ENCODE measurements at regions of chr21 and their contacts with region 1.

Region 1: DNA sequence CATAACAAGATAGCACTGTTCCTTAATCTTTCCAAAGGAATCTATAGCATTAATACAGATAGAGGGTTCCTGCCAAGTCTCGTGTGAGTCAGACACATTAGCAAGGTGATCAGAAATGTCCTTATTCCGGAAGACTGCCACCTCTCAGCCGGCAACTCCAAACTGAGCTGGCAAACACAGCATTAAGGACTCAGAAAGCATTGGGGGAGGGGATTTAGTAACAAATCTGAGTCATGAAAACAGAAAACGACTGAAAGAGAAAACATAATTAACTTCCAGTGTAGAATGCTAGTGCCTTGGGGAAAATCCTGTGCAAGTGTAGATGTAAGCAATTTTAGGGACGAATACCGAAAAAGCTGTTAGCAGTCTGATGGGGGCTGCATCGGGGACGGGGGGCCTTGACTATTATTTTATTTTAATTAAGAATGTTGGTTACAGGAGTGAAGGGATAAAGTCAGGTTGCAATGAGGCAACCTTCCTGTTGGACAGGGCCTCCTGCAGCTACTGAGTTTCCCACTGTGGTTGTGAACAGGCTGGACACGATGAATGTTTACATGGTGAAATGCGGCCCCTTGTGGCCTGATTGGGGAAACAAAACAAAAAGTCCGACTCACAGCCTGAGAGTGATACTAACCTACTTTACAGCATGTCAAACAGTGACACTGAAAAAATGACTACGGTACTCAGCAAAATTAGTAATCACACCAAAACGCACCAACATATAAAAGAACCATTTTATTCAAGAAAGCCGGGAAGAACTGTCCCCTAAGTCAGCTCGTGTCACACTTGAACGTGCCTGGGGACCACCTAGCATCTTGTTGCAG is 20.7 kb downstream of the MIS18A start:
- DNase-seq: peak in 1 of 2 donors; percentile 45
- ATAC-seq: peak; percentile 73 to 82
- H3K4me3 ChIP-seq: no peak overlapping the region
- H3K27ac ChIP-seq: no peak overlapping the region
- H3K4me1 ChIP-seq: peaks cover 0 to 4% of the 10 kb centered on the region in 2 donors
- H3K27me3 ChIP-seq: peaks cover 0 to 3% (median 3%) of the 10 kb centered on the region in 3 donors
- CTCF ChIP-seq: peak; percentile 44 to 65 (median 59)
- POLR2A ChIP-seq: no peak

Region 2: GRCh38 chr21:31786164-31786920 is 471.8 kb before region 1 on chr21:
- in situ Hi-C with region 1: no loop called
- intact Hi-C with region 1: loop called (anchors 5 kb)
- DNase-seq: no peak
- ATAC-seq: no peak
- H3K4me3 ChIP-seq: no peak overlapping the region
- H3K27ac ChIP-seq: no peak overlapping the region
- H3K4me1 ChIP-seq: no peaks in the 10 kb centered on the region
- H3K27me3 ChIP-seq: no peaks in the 10 kb centered on the region
- CTCF ChIP-seq: no peak
- POLR2A ChIP-seq: no peak

Region 3: DNA sequence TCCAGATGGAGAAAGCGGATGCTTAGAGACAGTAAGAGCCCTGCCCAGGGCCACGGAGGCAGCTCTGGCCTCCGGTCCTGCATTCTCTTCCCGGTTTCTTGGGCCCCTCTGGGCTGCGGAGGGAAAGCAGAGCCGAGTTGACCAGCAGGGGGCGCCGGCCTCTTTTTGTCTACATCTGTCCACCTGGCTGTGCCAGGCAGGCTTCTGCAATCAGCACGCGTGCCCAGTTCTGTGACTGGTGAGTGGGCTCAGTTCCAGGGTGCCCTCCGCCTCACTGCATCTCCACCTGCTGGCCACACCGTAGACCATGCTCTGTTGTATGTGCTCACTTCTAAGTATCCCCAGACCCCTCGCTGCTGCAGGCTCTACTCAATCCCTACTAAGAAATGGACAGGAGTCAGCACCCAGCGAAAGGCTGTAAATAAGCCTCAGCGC is 392.1 kb before region 1 on chr21:
- in situ Hi-C with region 1: loop called (anchors 5 to 10 kb)
- intact Hi-C with region 1: loop called (anchors 1 kb)
- DNase-seq: peak; percentile 52 to 73
- ATAC-seq: peak; percentile 78 to 89
- H3K4me3 ChIP-seq: no peak overlapping the region
- H3K27ac ChIP-seq: no peak overlapping the region
- H3K4me1 ChIP-seq: peaks cover 0 to 6% of the 10 kb centered on the region in 2 donors
- H3K27me3 ChIP-seq: peaks cover 0 to 7% (median 6%) of the 10 kb centered on the region in 3 donors
- CTCF ChIP-seq: peak; percentile 37 to 86 (median 79)
- POLR2A ChIP-seq: no peak

Region 4: GRCh38 chr21:32240851-32241687 is 17.1 kb before region 1 on chr21:
- in situ Hi-C with region 1: no loop called
- intact Hi-C with region 1: no loop called
- DNase-seq: no peak
- ATAC-seq: no peak
- H3K4me3 ChIP-seq: no peak overlapping the region
- H3K27ac ChIP-seq: no peak overlapping the region
- H3K4me1 ChIP-seq: no peaks in the 10 kb centered on the region
- H3K27me3 ChIP-seq: no peaks in the 10 kb centered on the region
- CTCF ChIP-seq: no peak
- POLR2A ChIP-seq: no peak

Region 5: GRCh38 chr21:33360881-33361602 is 1102.9 kb after region 1 on chr21:
- in situ Hi-C with region 1: no loop called
- intact Hi-C with region 1: no loop called
- DNase-seq: peak; percentile 27 to 66
- ATAC-seq: peak; percentile 82 to 95
- H3K4me3 ChIP-seq: peak overlapping the region; percentile 5 to 48 (median 26)
- H3K27ac ChIP-seq: peak overlapping the region; percentile 7 to 51 (median 30)
- H3K4me1 ChIP-seq: peaks cover 14 to 20% of the 10 kb centered on the region in 2 donors
- H3K27me3 ChIP-seq: no peaks in the 10 kb centered on the region
- CTCF ChIP-seq: peak; percentile 75 to 88 (median 84)
- POLR2A ChIP-seq: no peak

Measured in gastrocnemius medialis (tissue), 4 donors.